ENCODE measurements at regions of chr19 and their contacts with region 1.

Region 1: GRCh38 chr19:40674291-40674690 is 16.2 kb downstream of the NUMBL start:
- DNase-seq: no peak
- ATAC-seq: no peak
- H3K4me3 ChIP-seq: no peak overlapping the region
- H3K27ac ChIP-seq: no peak overlapping the region
- H3K4me1 ChIP-seq: peaks cover 0 to 14% (median 3%) of the 10 kb centered on the region in 9 donors
- H3K27me3 ChIP-seq: no peaks in the 10 kb centered on the region
- CTCF ChIP-seq: no peak

Region 2: GRCh38 chr19:40687525-40688016 is 13.3 kb after region 1 on chr19:
- intact Hi-C with region 1: loop called in 1 of 10 experiments (anchors 1 kb)
- DNase-seq: peak; percentile 81 to 82
- ATAC-seq: peak; percentile 9 to 74 (median 46)
- H3K4me3 ChIP-seq: peak overlapping the region in 3 of 10 donors; percentile 1 to 78 (median 68)
- H3K27ac ChIP-seq: peak overlapping the region in 8 of 10 donors; percentile 4 to 83 (median 64)
- H3K4me1 ChIP-seq: peaks cover 0 to 49% (median 31%) of the 10 kb centered on the region in 9 donors
- H3K27me3 ChIP-seq: no peaks in the 10 kb centered on the region
- CTCF ChIP-seq: no peak

Region 3: GRCh38 chr19:40744554-40745401 is 70.5 kb after region 1 on chr19:
- intact Hi-C with region 1: loop called in 1 of 10 experiments (anchors 5 kb)
- DNase-seq: no peak
- ATAC-seq: no peak
- H3K4me3 ChIP-seq: no peak overlapping the region
- H3K27ac ChIP-seq: peak overlapping the region in 1 of 10 donors; percentile 36
- H3K4me1 ChIP-seq: peaks cover 8 to 45% (median 23%) of the 10 kb centered on the region in 9 donors
- H3K27me3 ChIP-seq: no peaks in the 10 kb centered on the region
- CTCF ChIP-seq: peak in 3 of 9 donors; percentile 12 to 31 (median 17)

Measured in heart right ventricle (tissue), 16 donors.